Dorsolateral prefrontal cortex (tissue), 120 donors: ENCODE measurements at regions of chr12 and their contacts with region 1.

Region 1: GRCh38 chr12:5083955-5084849 is 40.5 kb downstream of the KCNA5 start:
- DNase-seq: peak in 3 of 10 donors; percentile 38 to 53 (median 51)
- H3K4me3 ChIP-seq: no peak overlapping the region
- H3K27ac ChIP-seq: no peak overlapping the region
- H3K27me3 ChIP-seq: peaks cover 0 to 3% (median 0%) of the 10 kb centered on the region in 45 donors
- CTCF ChIP-seq: peak; percentile 51 to 92 (median 79)

Region 2: DNA sequence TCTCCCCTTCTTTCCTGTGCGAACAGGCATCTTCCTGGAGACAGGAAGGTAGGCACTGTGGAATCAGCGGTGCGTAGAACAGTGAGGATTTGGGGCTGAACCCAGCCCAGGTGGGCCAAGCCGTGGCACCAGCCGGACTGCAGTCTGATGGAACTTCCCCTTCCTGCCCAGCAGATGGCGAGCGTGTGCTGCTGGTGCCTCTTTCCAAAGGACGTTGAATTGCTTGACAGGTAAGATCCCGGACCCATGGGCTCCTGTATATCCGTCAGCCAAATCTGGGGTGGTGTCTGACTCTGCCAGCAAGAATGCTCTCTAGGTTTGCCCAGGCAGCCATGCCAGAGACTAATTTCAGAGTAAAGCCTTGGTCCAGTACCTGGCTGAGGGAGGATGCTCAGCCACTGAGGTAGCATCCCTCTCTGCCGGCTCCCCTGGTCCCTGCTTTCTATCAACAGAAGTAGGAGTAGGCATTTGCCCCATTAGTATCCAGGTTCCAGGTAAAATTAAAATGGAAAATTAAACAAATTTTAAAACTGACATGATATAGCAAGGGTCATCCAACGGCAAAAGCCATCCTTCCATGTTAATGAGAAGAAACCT is 61.6 kb before region 1 on chr12:
- intact Hi-C with region 1: loop called (anchors 2 kb)
- DNase-seq: peak in 1 of 10 donors; percentile 69
- H3K4me3 ChIP-seq: no peak overlapping the region
- H3K27ac ChIP-seq: no peak overlapping the region
- H3K27me3 ChIP-seq: peaks cover 0 to 5% (median 0%) of the 10 kb centered on the region in 45 donors
- CTCF ChIP-seq: peak; percentile 40 to 98 (median 90)

Region 3: DNA sequence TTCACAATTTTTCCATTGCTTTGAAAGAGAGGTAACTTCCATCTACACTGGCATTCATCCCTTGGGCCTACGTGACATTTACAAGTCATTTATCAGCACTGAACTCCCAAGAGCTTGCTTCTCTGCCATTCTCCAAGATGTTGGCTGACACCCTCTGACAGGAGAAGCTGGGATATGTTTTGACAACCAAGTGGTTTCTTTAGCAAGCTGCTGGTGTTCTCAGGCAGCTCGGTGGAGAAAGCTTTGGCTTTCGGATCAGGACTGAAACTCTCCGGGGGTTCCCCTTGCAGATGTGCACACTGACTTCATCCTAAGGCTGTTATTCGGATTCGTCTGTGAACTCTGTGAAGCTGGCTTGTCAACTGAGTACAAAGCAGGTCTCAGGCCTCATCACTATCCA is 24.8 kb before region 1 on chr12:
- intact Hi-C with region 1: no loop called
- DNase-seq: no peak
- H3K4me3 ChIP-seq: no peak overlapping the region
- H3K27ac ChIP-seq: no peak overlapping the region
- H3K27me3 ChIP-seq: peaks cover 0 to 6% (median 0%) of the 10 kb centered on the region in 45 donors
- CTCF ChIP-seq: no peak